ENCODE measurements at regions of chr19 and their contacts with region 1.

Region 1: DNA sequence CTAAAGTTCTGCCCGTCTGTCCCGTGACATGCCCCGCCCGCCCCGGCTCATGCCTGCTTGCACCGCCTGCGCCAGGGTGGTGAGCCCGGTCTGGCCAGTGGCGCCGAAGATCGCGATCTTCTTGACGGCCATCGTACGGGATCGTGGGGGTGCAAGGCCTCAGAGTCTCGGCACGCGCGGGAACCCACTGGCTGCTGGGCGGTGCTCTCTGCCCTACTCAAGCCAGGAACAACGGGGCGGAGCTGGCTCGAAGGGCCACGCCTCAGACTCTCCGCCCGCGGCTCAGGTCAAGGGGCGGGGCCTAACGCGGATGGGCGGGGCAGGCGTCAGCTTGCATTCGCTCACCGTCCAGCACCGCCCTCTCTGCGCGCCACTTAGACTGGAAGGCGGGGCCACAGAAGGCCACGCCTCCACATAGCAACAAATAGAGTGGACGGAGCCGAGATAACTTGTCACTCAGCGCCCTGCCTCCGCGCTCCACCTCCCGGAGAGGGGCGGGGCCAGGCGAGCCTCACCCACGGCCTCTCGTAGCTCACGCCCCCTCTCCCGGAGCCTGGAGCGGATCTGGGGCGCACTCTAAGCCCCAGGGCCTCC is at the start of gene BLVRB:
- DNase-seq: peak; percentile 100
- ATAC-seq: peak; percentile 84
- H3K4me3 Mint-ChIP-seq: peak within 1 kb of the TSS; percentile 77
- H3K27ac Mint-ChIP-seq: peak within 1 kb of the TSS; percentile 87
- H3K4me1 Mint-ChIP-seq: peaks cover 30% of the 10 kb centered on the region
- H3K27me3 Mint-ChIP-seq: peaks cover 11% of the 10 kb centered on the region
- total RNA-seq, gene BLVRB: 34.1 to 35.6 TPM

Region 2: GRCh38 chr19:40403262-40403984 is 62.2 kb before region 1 on chr19:
- CTCF ChIA-PET with region 1: interaction called, 9 read pairs
- POLR2A ChIA-PET with region 1: no interaction called
- intact Hi-C with region 1: loop called in 1 of 2 experiments (anchors 1 kb)
- DNase-seq: peak; percentile 94
- ATAC-seq: peak; percentile 67
- H3K4me3 Mint-ChIP-seq: peak overlapping the region; percentile 77
- H3K27ac Mint-ChIP-seq: peak overlapping the region; percentile 0
- H3K4me1 Mint-ChIP-seq: peaks cover 19% of the 10 kb centered on the region
- H3K27me3 Mint-ChIP-seq: no peaks in the 10 kb centered on the region

Region 3: GRCh38 chr19:40433391-40434216 is 32.0 kb before region 1 on chr19:
- CTCF ChIA-PET with region 1: interaction called, 20 read pairs
- POLR2A ChIA-PET with region 1: interaction called, 3 read pairs
- intact Hi-C with region 1: no loop called
- DNase-seq: peak; percentile 74
- ATAC-seq: peak; percentile 86
- H3K4me3 Mint-ChIP-seq: peak overlapping the region; percentile 75
- H3K27ac Mint-ChIP-seq: peak overlapping the region; percentile 96
- H3K4me1 Mint-ChIP-seq: peaks cover 15% of the 10 kb centered on the region
- H3K27me3 Mint-ChIP-seq: no peaks in the 10 kb centered on the region

Region 4: GRCh38 chr19:40502647-40503319 is 37.1 kb after region 1 on chr19:
- CTCF ChIA-PET with region 1: no interaction called
- POLR2A ChIA-PET with region 1: no interaction called
- intact Hi-C with region 1: no loop called
- DNase-seq: no peak
- ATAC-seq: no peak
- H3K4me3 Mint-ChIP-seq: no peak overlapping the region
- H3K27ac Mint-ChIP-seq: no peak overlapping the region
- H3K4me1 Mint-ChIP-seq: no peaks in the 10 kb centered on the region
- H3K27me3 Mint-ChIP-seq: no peaks in the 10 kb centered on the region

Region 5: DNA sequence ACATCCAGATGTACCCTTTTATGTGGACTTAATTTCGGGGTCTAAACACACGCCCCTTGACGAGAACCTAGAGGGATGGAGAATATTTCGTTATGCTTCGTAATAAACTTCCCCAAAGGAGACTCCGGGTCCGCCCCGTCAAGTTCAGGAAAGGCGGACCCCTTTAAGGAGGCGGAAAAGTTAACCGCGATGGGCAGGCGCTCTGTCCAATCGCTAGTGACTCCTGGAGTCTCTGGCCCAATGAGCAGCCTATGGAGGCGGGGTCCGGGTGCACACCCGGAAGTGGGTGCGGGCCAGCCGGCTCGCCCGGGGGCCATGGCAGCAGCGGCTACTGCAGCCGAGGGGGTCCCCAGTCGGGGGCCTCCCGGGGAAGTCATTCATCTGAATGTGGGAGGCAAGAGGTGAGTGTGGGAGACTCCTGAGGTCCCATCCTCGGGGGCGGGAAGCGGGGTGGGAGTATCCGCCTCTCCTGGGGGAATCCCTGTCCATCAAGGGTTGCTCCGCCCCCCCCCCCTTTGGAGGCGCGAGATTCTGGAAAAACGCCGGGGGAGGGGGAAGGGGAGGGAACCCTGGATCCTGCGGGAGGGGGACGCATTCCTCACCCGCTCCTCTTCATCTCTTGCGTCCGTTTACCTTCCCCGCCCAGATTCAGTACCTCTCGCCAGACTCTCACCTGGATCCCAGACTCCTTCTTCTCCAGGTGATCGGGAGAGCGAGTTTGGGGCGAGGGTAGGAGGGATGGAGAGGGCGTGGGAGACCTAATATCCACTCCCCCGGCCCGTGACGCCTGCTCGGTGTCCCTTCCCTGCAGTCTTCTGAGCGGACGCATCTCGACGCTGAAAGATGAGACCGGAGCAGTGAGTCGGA is 111.2 kb after region 1 on chr19 and contains the start of gene SHKBP1:
- CTCF ChIA-PET with region 1: no interaction called
- POLR2A ChIA-PET with region 1: no interaction called
- intact Hi-C with region 1: loop called in 1 of 2 experiments (anchors 1 kb)
- DNase-seq: peak; percentile 96
- ATAC-seq: peak; percentile 100
- H3K4me3 Mint-ChIP-seq: peak within 1 kb of the TSS; percentile 85
- H3K27ac Mint-ChIP-seq: peak within 1 kb of the TSS; percentile 74
- H3K4me1 Mint-ChIP-seq: peaks cover 16% of the 10 kb centered on the region
- H3K27me3 Mint-ChIP-seq: no peaks in the 10 kb centered on the region
- total RNA-seq, gene SHKBP1: 100 to 155 TPM

Region 6: GRCh38 chr19:40798223-40798996 is 332.8 kb after region 1 on chr19:
- CTCF ChIA-PET with region 1: no interaction called
- POLR2A ChIA-PET with region 1: no interaction called
- intact Hi-C with region 1: loop called in 1 of 2 experiments (anchors 1 kb)
- DNase-seq: peak; percentile 100
- ATAC-seq: peak; percentile 82
- H3K4me3 Mint-ChIP-seq: peak overlapping the region; percentile 91
- H3K27ac Mint-ChIP-seq: peak overlapping the region; percentile 97
- H3K4me1 Mint-ChIP-seq: peaks cover 49% of the 10 kb centered on the region
- H3K27me3 Mint-ChIP-seq: no peaks in the 10 kb centered on the region

Measured in activated CD4-positive, alpha-beta T cell treated with anti-CD3 and anti-CD28 coated beads for 36 hours (primary cell).